ENCODE measurements at regions of chr20 and their contacts with region 1.

Region 1: GRCh38 chr20:32652739-32653526 is 20.8 kb downstream of the C20orf203 start:
- DNase-seq: peak; percentile 77 to 94 (median 88)
- ATAC-seq: peak; percentile 99
- H3K4me3 ChIP-seq: peak overlapping the region; percentile 6
- H3K4me3 Mint-ChIP-seq: peak overlapping the region; percentile 49
- H3K27ac ChIP-seq: no peak overlapping the region
- H3K27ac Mint-ChIP-seq: no peak overlapping the region
- H3K4me1 ChIP-seq: peaks cover 15% of the 10 kb centered on the region
- H3K4me1 Mint-ChIP-seq: peaks cover 12% of the 10 kb centered on the region
- H3K27me3 ChIP-seq: no peaks in the 10 kb centered on the region
- H3K27me3 Mint-ChIP-seq: no peaks in the 10 kb centered on the region
- CTCF ChIP-seq: peak; percentile 93

Region 2: GRCh38 chr20:31849455-31849925 is 803.4 kb before region 1 on chr20:
- CTCF ChIA-PET with region 1: interaction called, 3 read pairs
- POLR2A ChIA-PET with region 1: no interaction called
- intact Hi-C with region 1: loop called (anchors 1 to 2 kb)
- DNase-seq: no peak
- ATAC-seq: no peak
- H3K4me3 ChIP-seq: no peak overlapping the region
- H3K4me3 Mint-ChIP-seq: no peak overlapping the region
- H3K27ac ChIP-seq: no peak overlapping the region
- H3K27ac Mint-ChIP-seq: no peak overlapping the region
- H3K4me1 ChIP-seq: peaks cover 7% of the 10 kb centered on the region
- H3K4me1 Mint-ChIP-seq: no peaks in the 10 kb centered on the region
- H3K27me3 ChIP-seq: peaks cover 8 to 14% of the 10 kb centered on the region in 2 experiments
- H3K27me3 Mint-ChIP-seq: peaks cover 32% of the 10 kb centered on the region
- CTCF ChIP-seq: no peak

Region 3: DNA sequence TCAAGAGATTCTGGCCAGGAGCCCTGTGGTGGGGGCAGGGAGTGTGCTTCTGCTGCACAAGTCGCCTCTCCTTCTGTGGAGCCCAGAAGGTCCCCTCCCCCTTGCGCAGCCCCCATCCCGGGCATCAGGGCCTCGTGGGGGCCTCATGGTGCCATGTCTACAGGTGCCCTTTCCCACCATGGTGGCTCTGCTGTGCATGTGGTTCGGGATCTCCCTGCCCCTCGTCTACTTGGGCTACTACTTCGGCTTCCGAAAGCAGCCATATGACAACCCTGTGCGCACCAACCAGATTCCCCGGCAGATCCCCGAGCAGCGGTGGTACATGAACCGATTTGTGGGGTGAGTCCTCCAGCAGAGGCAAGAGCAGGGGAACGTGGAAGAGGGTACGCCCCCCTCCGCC is 495.3 kb before region 1 on chr20:
- CTCF ChIA-PET with region 1: no interaction called
- POLR2A ChIA-PET with region 1: no interaction called
- intact Hi-C with region 1: loop called in 1 of 2 experiments (anchors 2 kb)
- DNase-seq: no peak
- ATAC-seq: no peak
- H3K4me3 ChIP-seq: no peak overlapping the region
- H3K4me3 Mint-ChIP-seq: no peak overlapping the region
- H3K27ac ChIP-seq: no peak overlapping the region
- H3K27ac Mint-ChIP-seq: no peak overlapping the region
- H3K4me1 ChIP-seq: no peaks in the 10 kb centered on the region
- H3K4me1 Mint-ChIP-seq: no peaks in the 10 kb centered on the region
- H3K27me3 ChIP-seq: no peaks in the 10 kb centered on the region
- H3K27me3 Mint-ChIP-seq: no peaks in the 10 kb centered on the region
- CTCF ChIP-seq: no peak

Region 4: DNA sequence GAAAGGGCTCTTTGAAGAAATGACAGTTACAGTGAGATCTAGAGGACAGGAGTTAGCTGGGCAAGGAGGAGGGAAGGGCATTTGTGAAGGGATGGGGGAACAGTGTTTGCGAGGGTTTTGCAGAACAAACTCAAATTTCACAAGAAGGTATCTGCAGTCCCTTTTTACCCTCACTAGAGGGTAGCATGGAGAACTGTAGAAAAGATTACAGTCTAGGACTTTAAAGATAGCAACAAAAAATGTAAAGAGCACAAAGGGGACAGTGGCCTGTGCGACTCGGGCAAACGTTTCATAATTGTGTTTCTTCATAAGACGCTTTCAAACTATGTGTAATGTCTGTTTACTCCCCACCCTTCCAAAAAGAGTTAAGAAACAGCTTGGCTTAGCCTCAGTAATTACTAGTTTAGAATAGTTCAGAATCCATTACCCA is 316.0 kb before region 1 on chr20:
- CTCF ChIA-PET with region 1: no interaction called
- POLR2A ChIA-PET with region 1: no interaction called
- intact Hi-C with region 1: loop called (anchors 1 kb)
- DNase-seq: peak in 3 of 14 experiments; percentile 35 to 53 (median 53)
- ATAC-seq: peak; percentile 73
- H3K4me3 ChIP-seq: no peak overlapping the region
- H3K4me3 Mint-ChIP-seq: no peak overlapping the region
- H3K27ac ChIP-seq: no peak overlapping the region
- H3K27ac Mint-ChIP-seq: peak overlapping the region; percentile 1
- H3K4me1 ChIP-seq: peaks cover 26% of the 10 kb centered on the region
- H3K4me1 Mint-ChIP-seq: peaks cover 22% of the 10 kb centered on the region
- H3K27me3 ChIP-seq: no peaks in the 10 kb centered on the region
- H3K27me3 Mint-ChIP-seq: no peaks in the 10 kb centered on the region
- CTCF ChIP-seq: peak; percentile 64

Region 5: GRCh38 chr20:32521780-32522525 is 131.0 kb before region 1 on chr20:
- CTCF ChIA-PET with region 1: interaction called, 75 read pairs
- POLR2A ChIA-PET with region 1: interaction called, 16 read pairs
- intact Hi-C with region 1: loop called (anchors 1 kb)
- DNase-seq: peak; percentile 52 to 86 (median 65)
- ATAC-seq: peak; percentile 85
- H3K4me3 ChIP-seq: peak overlapping the region; percentile 5
- H3K4me3 Mint-ChIP-seq: peak overlapping the region; percentile 35
- H3K27ac ChIP-seq: peak overlapping the region; percentile 55 to 69
- H3K27ac Mint-ChIP-seq: peak overlapping the region; percentile 99
- H3K4me1 ChIP-seq: peaks cover 72% of the 10 kb centered on the region
- H3K4me1 Mint-ChIP-seq: peaks cover 61% of the 10 kb centered on the region
- H3K27me3 ChIP-seq: no peaks in the 10 kb centered on the region
- H3K27me3 Mint-ChIP-seq: no peaks in the 10 kb centered on the region
- CTCF ChIP-seq: peak; percentile 85

Region 6: DNA sequence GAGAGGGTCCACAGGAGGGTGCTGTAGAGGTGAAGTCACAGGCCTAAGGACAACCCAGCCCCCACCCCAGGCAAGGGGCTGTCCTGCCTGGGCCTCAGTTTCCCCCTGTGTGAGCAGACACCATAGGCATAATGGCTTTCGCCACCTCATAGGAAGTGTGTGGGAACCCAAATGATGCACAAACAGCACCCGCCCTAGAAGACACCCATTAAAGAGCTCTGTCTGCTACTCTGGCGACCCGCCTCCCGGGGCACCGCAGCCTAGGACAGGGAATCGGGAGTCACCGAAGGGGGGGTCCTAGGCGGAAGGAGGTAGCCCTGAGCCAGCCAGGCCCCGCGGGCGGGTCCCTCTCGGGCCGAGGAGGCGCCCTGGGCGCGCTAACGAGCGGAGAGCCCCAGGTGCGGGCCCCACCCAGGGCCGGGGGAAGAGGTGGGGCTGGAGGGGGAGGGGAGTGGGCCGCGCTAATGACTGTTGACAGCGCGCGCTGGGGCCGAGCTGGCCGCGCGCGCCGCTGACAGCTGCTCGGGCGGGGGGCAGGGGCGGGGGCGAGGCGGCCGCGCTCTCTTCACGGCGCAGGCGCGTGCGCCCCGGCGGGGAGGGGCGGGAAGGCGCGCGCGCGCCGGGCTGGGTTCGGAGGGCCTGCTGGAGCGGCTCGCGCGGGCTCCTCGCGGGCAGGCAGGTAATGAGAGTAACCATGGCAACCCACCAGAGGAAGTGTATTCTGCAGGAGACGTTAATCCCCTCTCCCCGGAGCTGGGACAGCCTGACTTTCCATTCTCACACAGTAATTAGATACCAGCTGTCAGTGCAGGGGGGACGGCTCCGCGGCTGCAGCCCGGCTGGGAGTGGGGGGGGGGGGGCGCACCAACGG is 116.7 kb before region 1 on chr20:
- CTCF ChIA-PET with region 1: interaction called, 14 read pairs
- POLR2A ChIA-PET with region 1: interaction called, 6 read pairs
- intact Hi-C with region 1: no loop called
- DNase-seq: peak; percentile 65 to 95 (median 80)
- ATAC-seq: peak; percentile 39
- H3K4me3 ChIP-seq: peak overlapping the region; percentile 54
- H3K4me3 Mint-ChIP-seq: peak overlapping the region; percentile 87
- H3K27ac ChIP-seq: peak overlapping the region; percentile 84 to 91
- H3K27ac Mint-ChIP-seq: peak overlapping the region; percentile 99
- H3K4me1 ChIP-seq: peaks cover 92% of the 10 kb centered on the region
- H3K4me1 Mint-ChIP-seq: peaks cover 88% of the 10 kb centered on the region
- H3K27me3 ChIP-seq: no peaks in the 10 kb centered on the region
- H3K27me3 Mint-ChIP-seq: no peaks in the 10 kb centered on the region
- CTCF ChIP-seq: no peak

Region 7: GRCh38 chr20:32685541-32686529 is 32.9 kb after region 1 on chr20:
- CTCF ChIA-PET with region 1: no interaction called
- POLR2A ChIA-PET with region 1: no interaction called
- intact Hi-C with region 1: no loop called
- DNase-seq: no peak
- ATAC-seq: no peak
- H3K4me3 ChIP-seq: no peak overlapping the region
- H3K4me3 Mint-ChIP-seq: no peak overlapping the region
- H3K27ac ChIP-seq: no peak overlapping the region
- H3K27ac Mint-ChIP-seq: no peak overlapping the region
- H3K4me1 ChIP-seq: peaks cover 9% of the 10 kb centered on the region
- H3K4me1 Mint-ChIP-seq: no peaks in the 10 kb centered on the region
- H3K27me3 ChIP-seq: no peaks in the 10 kb centered on the region
- H3K27me3 Mint-ChIP-seq: no peaks in the 10 kb centered on the region
- CTCF ChIP-seq: no peak

Region 8: GRCh38 chr20:32830437-32830836 is 177.5 kb after region 1 on chr20:
- CTCF ChIA-PET with region 1: no interaction called
- POLR2A ChIA-PET with region 1: no interaction called
- intact Hi-C with region 1: no loop called
- DNase-seq: peak in 3 of 14 experiments; percentile 18 to 61 (median 54)
- ATAC-seq: peak; percentile 44
- H3K4me3 ChIP-seq: no peak overlapping the region
- H3K4me3 Mint-ChIP-seq: peak overlapping the region; percentile 59
- H3K27ac ChIP-seq: peak overlapping the region in 1 of 2 donors; percentile 36
- H3K27ac Mint-ChIP-seq: peak overlapping the region; percentile 77
- H3K4me1 ChIP-seq: peaks cover 34% of the 10 kb centered on the region
- H3K4me1 Mint-ChIP-seq: peaks cover 68% of the 10 kb centered on the region
- H3K27me3 ChIP-seq: no peaks in the 10 kb centered on the region
- H3K27me3 Mint-ChIP-seq: no peaks in the 10 kb centered on the region
- CTCF ChIP-seq: no peak

Measured in CD4-positive, alpha-beta T cell (primary cell).